ENCODE measurements at regions of chr1 and their contacts with region 1.

Region 1: DNA sequence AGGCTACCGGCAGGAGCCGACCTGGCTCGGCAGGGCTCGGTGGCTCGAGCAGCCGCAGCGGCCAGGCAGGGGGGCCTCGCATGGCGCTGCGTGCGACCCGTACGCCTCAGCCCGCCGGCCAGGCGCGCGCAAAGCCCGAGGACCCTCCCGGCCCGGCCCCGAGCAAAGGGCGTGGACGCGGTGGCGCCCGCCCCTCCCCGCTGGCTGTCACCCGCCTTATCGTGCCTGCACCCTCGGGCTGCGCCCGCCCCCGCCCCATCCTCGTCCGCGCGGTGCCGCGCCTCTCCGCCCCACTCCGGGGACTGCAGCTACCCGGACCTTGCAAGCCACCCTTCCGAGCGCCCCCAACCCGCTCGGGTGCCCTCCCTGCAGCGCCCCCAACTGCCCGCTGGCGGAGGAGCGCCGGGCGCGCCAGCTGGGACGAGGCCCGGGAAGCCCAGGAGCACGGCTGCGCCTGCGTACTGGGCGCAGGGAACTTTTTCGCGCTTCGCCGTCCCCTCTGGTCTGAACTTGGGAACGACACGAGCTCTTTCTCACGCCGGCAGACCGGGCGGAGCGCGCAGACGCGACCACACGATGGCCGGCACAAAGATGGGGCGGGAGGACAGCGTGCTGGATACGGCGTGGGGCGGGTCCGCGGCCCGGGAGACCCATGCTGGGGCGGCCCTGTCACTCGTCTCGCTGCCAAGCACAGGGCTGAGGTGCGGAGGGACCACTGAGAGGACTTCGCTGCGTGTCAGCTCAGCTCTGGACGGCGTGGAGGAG is at the start of gene ABCB10:
- DNase-seq: peak; percentile 64
- H3K4me3 ChIP-seq: peak within 1 kb of the TSS; percentile 69 to 99 (median 89)
- H3K27ac ChIP-seq: peak within 1 kb of the TSS; percentile 87 to 97 (median 93)
- H3K4me1 ChIP-seq: peaks cover 10 to 52% (median 27%) of the 10 kb centered on the region in 3 donors
- H3K27me3 ChIP-seq: no peaks in the 10 kb centered on the region
- CTCF ChIP-seq: peak; percentile 72 to 88 (median 79)
- POLR2A ChIP-seq: peak in 3 of 4 donors; percentile 3 to 62 (median 7)
- total RNA-seq, gene ABCB10: 9.9 to 18.6 (median 14.3) TPM

Region 2: DNA sequence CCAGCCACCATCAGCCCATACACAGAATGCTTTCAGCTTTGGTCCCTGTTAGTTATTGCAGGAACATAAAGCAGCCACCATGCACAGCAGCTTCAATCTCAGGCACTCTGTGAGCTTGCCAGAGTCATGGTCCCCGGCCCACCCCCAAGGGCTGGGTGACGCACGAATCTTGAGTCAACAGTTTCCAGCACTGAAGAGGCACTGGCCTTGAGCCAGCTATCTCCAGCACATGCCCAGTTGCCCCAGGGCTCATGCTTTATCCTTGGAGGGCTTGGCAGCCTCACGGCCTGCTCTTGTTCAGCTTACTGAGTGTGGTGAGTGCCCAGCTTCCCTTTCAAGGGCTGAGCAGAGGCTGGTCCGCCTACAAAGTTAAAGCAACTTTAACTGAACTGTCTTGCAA is 488.6 kb before region 1 on chr1:
- intact Hi-C with region 1: no loop called
- DNase-seq: peak; percentile 23
- H3K4me3 ChIP-seq: no peak overlapping the region
- H3K27ac ChIP-seq: peak overlapping the region in 1 of 4 donors; percentile 22
- H3K4me1 ChIP-seq: peaks cover 6 to 37% (median 11%) of the 10 kb centered on the region in 3 donors
- H3K27me3 ChIP-seq: no peaks in the 10 kb centered on the region
- CTCF ChIP-seq: no peak
- POLR2A ChIP-seq: no peak

Region 3: GRCh38 chr1:229625915-229626831 is 67.4 kb after region 1 on chr1 and contains the starts of genes TAF5L and URB2:
- intact Hi-C with region 1: loop called (anchors 5 kb)
- DNase-seq: peak; percentile 16
- H3K4me3 ChIP-seq: peak within 1 kb of the TSS; percentile 82 to 98 (median 97)
- H3K27ac ChIP-seq: peak within 1 kb of the TSS; percentile 85 to 97 (median 94)
- H3K4me1 ChIP-seq: peaks cover 0 to 54% (median 18%) of the 10 kb centered on the region in 3 donors
- H3K27me3 ChIP-seq: no peaks in the 10 kb centered on the region
- CTCF ChIP-seq: peak in 1 of 6 experiments; percentile 7
- POLR2A ChIP-seq: peak in 2 of 4 donors; percentile 37 to 56
- total RNA-seq, gene TAF5L: 7.8 to 15.8 (median 12.7) TPM
- total RNA-seq, gene URB2: 7.8 to 14.1 (median 11.0) TPM

Region 4: GRCh38 chr1:229694053-229694693 is 135.4 kb after region 1 on chr1:
- intact Hi-C with region 1: no loop called
- DNase-seq: no peak
- H3K4me3 ChIP-seq: no peak overlapping the region
- H3K27ac ChIP-seq: peak overlapping the region in 2 of 4 donors; percentile 44 to 70
- H3K4me1 ChIP-seq: peaks cover 0 to 9% (median 0%) of the 10 kb centered on the region in 3 donors
- H3K27me3 ChIP-seq: no peaks in the 10 kb centered on the region
- CTCF ChIP-seq: no peak
- POLR2A ChIP-seq: no peak